ENCODE measurements at regions of chr16 and their contacts with region 1.

Region 1: DNA sequence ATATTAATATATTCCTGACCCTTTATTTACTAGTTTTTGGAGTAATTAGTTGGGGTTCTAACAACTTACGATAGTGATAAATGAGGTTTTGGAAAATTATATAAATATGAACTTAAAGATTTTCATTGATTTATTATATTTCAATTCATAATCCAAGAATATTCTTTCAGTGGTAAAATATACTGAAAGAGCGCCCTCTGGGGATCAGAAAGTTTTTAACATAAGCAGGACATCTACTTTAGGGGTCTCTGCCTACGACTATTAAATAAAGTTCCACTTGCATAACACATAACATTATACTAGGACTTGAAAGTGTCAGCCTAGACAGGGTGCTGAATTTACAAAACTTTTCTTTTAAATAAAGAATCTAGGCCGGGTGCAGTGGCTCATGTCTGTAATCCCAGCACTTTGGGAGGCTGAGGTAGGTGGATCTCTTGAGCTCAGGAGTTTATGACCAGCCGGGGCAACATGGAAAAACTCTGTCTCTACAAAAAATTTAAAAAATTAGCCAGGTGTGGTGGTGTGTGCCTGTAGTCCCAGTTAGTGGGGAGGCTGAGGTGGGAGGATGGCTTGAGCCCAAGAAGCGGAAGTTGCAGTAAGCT is 15.6 kb downstream of the RFWD3 start:
- DNase-seq: no peak
- H3K4me3 ChIP-seq: no peak overlapping the region
- CTCF ChIP-seq: no peak

Region 2: DNA sequence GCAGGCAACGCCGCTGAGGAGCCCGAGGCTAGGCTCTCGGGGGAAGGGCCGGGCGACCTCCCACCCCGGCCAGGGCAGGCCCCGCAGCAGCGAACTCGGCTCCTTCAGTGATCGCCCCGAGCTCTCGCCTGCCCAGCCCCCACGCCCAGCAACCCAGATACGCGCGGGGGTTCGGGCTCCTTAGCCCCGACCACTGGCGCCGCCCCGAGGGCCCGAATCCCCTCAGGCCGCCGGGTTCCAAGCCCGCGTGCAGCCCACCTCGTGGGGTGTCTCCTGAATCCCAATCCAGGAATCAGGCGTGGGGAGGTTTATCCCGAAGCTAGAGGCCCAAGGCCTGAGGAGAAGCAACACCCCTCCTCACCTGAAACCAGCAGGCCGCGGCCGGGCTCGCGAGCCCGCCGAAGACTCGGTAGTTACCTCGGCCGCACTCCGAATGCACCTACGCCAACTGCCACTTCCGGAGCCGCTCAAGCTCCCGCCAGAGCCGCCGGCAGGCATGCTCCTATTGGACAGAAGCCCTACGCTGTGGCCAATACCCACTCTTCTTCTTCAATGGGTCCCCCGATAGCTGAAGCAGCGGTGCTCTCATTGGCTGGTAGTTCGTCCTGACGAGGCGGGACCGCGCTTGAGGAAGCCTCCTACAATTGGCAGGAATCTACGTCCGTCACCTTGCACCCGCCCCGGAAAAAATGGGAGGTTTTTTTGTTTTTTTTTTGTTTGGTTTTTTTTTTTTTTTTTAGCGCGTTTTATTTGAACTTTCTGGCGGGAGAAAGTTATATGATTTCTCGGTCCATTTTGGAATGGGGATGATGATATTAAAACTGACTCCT is 15.6 kb after region 1 on chr16 and contains the start of gene RFWD3:
- CTCF ChIA-PET with region 1: interaction called, 34 read pairs
- POLR2A ChIA-PET with region 1: interaction called, 5 read pairs
- DNase-seq: peak; percentile 95
- H3K4me3 ChIP-seq: peak within 1 kb of the TSS; percentile 88
- CTCF ChIP-seq: no peak

Region 3: GRCh38 chr16:74718741-74719610 is 67.9 kb after region 1 on chr16:
- CTCF ChIA-PET with region 1: no interaction called
- POLR2A ChIA-PET with region 1: no interaction called
- DNase-seq: no peak
- H3K4me3 ChIP-seq: no peak overlapping the region
- CTCF ChIP-seq: no peak

Measured in AG04449 (cell line).